Right ventricle myocardium inferior (tissue), 1 donor: ENCODE measurements at regions of chr17 and their contacts with region 1.

Region 1: DNA sequence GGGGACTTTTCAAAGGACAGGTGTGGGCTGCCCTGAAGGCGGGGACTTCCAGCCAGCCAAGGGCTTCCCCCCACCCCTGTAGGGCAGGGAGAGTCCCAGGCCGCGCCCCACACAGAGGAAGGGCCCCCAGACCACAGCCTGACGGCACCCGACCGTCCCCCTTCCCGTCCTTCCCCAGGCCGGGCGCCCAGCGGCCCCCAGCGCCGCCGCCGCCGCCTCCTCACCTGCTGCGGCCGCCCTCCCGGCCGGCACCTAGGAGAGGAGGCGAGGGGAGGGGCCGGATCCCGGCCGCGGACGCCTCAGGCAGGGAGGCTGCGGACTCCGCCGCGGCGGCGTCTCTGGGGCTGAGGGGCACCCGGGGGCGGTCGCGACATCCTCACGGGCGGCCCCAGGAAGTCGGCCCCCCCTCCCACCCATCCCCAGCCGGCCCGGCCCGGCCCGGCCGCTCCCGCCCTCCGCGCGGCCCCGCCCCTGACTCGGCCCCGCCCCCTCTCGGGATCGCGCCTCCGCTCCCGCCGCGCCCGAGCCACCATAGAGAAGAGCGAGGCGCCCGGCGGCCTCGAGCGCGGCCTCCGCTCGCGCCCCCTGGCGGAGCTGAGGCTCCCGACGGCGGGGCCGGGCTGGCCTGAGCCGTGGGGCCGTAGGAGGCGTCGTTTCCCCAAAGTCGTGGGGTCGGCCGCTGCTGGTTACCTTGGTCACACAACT is 25.5 kb upstream of the RFFL start:
- DNase-seq: peak; percentile 96
- ATAC-seq: peak; percentile 97

Region 2: GRCh38 chr17:34961093-34961911 is 127.7 kb before region 1 on chr17 and contains the starts of genes CCT6B and ZNF830:
- intact Hi-C with region 1: loop called (anchors 1 kb)
- DNase-seq: peak; percentile 93
- ATAC-seq: peak; percentile 95
- total RNA-seq, gene CCT6B: 1.4 TPM
- total RNA-seq, gene ZNF830: 9.8 TPM

Region 3: DNA sequence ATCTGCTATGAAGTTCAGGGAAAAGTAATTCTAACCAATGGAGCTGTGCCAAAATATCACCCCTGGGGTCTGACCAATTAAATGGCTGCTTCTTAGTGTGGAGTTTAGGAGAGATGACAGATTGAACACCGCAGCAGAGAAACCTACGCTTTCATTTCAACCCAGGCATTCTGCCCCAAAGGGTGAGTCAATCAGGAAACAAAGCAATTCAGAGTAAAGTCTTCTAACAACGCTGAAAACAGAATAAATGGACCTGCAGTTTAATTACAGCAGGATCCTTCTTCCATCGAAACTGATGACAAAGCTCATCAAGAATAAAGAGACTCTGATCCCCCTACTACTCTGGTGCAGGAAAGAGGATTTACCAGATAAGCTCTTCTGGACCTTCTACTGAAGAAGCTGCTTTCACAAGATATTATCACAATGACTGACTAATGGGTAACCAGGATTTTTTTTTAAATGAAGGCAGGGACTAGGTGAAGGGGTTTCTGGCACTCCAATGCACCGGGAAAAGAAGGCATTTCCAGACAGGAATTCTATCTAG is 42.2 kb before region 1 on chr17:
- intact Hi-C with region 1: no loop called
- DNase-seq: no peak
- ATAC-seq: no peak